Activated B cell treated with CpG ODN at 0.5 μM for 24 hours (primary cell): ENCODE measurements at regions of chr3 and their contacts with region 1.

Region 1: GRCh38 chr3:63333842-63334241 is 55.7 kb downstream of the SYNPR start:
- DNase-seq: no peak
- ATAC-seq: no peak
- H3K4me3 Mint-ChIP-seq: no peak overlapping the region
- H3K27ac Mint-ChIP-seq: no peak overlapping the region
- H3K4me1 Mint-ChIP-seq: no peaks in the 10 kb centered on the region
- H3K27me3 Mint-ChIP-seq: peaks cover 3% of the 10 kb centered on the region
- CTCF ChIP-seq: no peak

Region 2: DNA sequence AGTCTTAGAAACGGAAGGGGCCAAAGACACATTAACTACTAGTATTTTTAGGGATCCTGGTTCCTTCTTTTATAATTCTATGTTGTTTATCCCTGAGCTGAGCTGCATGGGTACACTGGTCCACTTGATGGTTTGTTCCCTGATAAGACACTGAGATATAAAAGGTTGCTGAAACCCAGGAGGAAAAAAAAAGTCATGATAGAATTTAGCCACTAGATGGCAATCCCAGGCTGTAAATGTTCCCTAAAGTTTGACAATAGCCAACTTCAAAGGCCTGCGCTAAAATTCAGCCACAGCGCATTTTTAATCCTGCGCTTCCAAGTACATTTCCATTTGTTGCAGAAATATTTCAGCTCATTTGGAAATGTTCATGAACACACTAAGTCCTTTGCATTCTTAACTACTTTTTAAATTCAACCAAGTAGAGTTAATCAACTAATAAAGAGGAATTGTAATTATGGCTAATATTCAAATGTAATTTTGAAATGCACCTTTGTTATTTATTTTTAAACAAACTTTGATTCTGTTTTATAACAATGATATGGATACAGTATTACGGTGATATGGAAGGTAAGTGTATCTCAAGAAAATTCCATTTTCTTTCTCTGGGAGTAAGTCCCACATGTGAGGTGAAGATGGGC is 711.2 kb before region 1 on chr3:
- CTCF ChIA-PET with region 1: no interaction called
- POLR2A ChIA-PET with region 1: no interaction called
- intact Hi-C with region 1: loop called (anchors 2 kb)
- DNase-seq: no peak
- ATAC-seq: no peak
- H3K4me3 Mint-ChIP-seq: no peak overlapping the region
- H3K27ac Mint-ChIP-seq: no peak overlapping the region
- H3K4me1 Mint-ChIP-seq: peaks cover 2% of the 10 kb centered on the region
- H3K27me3 Mint-ChIP-seq: no peaks in the 10 kb centered on the region
- CTCF ChIP-seq: no peak

Region 3: GRCh38 chr3:62665598-62666437 is 668.0 kb before region 1 on chr3:
- CTCF ChIA-PET with region 1: no interaction called
- POLR2A ChIA-PET with region 1: no interaction called
- intact Hi-C with region 1: loop called (anchors 5 kb)
- DNase-seq: no peak
- ATAC-seq: no peak
- H3K4me3 Mint-ChIP-seq: no peak overlapping the region
- H3K27ac Mint-ChIP-seq: no peak overlapping the region
- H3K4me1 Mint-ChIP-seq: no peaks in the 10 kb centered on the region
- H3K27me3 Mint-ChIP-seq: no peaks in the 10 kb centered on the region
- CTCF ChIP-seq: no peak

Region 4: GRCh38 chr3:63228087-63229023 is 105.5 kb before region 1 on chr3:
- CTCF ChIA-PET with region 1: no interaction called
- POLR2A ChIA-PET with region 1: no interaction called
- intact Hi-C with region 1: no loop called
- DNase-seq: no peak
- ATAC-seq: no peak
- H3K4me3 Mint-ChIP-seq: no peak overlapping the region
- H3K27ac Mint-ChIP-seq: no peak overlapping the region
- H3K4me1 Mint-ChIP-seq: peaks cover 2% of the 10 kb centered on the region
- H3K27me3 Mint-ChIP-seq: no peaks in the 10 kb centered on the region
- CTCF ChIP-seq: no peak